ENCODE measurements at regions of chr2 and their contacts with region 1.

Region 1: GRCh38 chr2:85741833-85742455 is 11.8 kb upstream of the ATOH8 start:
- DNase-seq: peak; percentile 88
- H3K4me3 ChIP-seq: peak overlapping the region; percentile 23
- CTCF ChIP-seq: no peak

Region 2: GRCh38 chr2:85642725-85643124 is 99.2 kb before region 1 on chr2:
- CTCF ChIA-PET with region 1: interaction called, 16 read pairs
- POLR2A ChIA-PET with region 1: no interaction called
- DNase-seq: no peak
- H3K4me3 ChIP-seq: no peak overlapping the region
- CTCF ChIP-seq: no peak

Region 3: DNA sequence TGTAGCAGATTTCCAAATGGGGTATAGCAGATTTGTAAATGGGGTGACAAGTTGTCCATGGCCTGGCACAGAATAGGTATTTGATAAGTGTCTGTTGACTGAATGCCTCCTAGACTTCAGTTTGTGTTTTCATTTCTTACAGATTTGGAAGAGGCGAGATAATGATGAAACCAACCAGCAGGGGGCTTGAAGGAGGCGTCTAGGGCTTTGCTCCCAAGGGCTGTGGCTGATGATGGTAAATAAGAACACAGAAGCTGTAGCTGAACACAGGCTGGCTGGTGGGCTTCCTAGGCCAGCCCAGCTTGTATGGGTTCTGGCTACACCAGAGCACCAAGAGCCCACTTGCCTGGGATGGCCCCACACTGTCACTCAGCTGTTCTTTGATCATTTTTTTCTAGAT is 93.3 kb before region 1 on chr2:
- CTCF ChIA-PET with region 1: interaction called, 11 read pairs
- POLR2A ChIA-PET with region 1: interaction called, 5 read pairs
- DNase-seq: no peak
- H3K4me3 ChIP-seq: no peak overlapping the region
- CTCF ChIP-seq: peak; percentile 65